ENCODE measurements at regions of chr4 and their contacts with region 1.

Region 1: DNA sequence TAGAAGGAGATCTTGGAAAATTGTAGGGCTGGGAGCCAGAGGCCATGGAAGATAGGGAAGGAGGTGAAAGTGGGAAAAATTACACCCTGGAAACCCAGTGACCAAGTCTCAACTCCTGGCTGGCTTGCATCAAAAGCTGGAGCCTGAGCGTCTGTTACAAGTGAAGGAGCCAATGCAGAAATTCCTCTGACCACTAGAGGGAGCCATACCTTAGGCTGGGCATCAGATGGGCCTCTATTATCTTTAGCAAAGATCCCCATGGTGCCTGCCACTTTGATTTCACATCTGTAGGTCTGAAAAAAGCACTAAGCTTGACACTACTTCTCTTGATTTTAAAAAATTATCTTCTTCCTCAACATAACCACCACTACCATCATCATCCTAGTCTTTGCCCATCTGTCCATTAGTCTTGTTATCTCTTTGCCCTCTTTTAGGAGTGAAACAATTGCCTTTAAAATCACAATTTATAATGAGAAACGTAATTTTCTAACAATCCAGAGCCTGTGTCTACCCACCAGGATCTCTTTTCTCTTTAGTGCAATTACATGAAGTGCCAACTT is 62.9 kb downstream of the ANAPC4 start:
- DNase-seq: peak; percentile 36 to 58
- ATAC-seq: peak; percentile 78 to 90; a peak in 5 of 6 replicates
- H3K4me3 ChIP-seq: no peak overlapping the region
- H3K27ac ChIP-seq: no peak overlapping the region
- H3K4me1 ChIP-seq: no peaks in the 10 kb centered on the region
- CTCF ChIP-seq: peak; percentile 79
- EP300 ChIP-seq: no peak
- POLR2A ChIP-seq: no peak
- RAD21 ChIP-seq: peak; percentile 57 to 68

Region 2: DNA sequence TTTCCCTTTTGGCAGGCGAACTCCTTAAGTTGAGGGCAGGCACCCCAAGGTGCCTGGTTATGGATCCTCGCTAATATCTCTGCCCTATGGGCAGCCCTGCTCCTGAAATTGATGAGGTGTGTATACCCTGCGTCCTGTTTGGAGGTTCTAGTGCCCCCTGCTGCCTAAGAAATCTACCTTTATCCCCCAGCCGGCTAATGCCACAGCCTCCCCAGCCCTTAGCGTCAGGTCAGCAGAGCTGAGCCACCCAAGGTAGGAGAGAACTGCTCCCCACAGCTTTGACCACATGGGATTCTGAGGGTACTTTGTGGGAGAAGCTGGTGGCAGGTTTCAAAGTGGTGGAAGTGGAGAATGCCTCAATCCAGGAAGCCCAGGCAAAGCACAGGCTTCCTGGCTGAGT is 12.1 kb before region 1 on chr4:
- CTCF ChIA-PET with region 1: interaction called, 47 read pairs
- POLR2A ChIA-PET with region 1: no interaction called
- DNase-seq: no peak
- ATAC-seq: no peak
- H3K4me3 ChIP-seq: no peak overlapping the region
- H3K27ac ChIP-seq: no peak overlapping the region
- H3K4me1 ChIP-seq: no peaks in the 10 kb centered on the region
- CTCF ChIP-seq: no peak
- EP300 ChIP-seq: no peak
- POLR2A ChIP-seq: no peak
- RAD21 ChIP-seq: no peak

Region 3: DNA sequence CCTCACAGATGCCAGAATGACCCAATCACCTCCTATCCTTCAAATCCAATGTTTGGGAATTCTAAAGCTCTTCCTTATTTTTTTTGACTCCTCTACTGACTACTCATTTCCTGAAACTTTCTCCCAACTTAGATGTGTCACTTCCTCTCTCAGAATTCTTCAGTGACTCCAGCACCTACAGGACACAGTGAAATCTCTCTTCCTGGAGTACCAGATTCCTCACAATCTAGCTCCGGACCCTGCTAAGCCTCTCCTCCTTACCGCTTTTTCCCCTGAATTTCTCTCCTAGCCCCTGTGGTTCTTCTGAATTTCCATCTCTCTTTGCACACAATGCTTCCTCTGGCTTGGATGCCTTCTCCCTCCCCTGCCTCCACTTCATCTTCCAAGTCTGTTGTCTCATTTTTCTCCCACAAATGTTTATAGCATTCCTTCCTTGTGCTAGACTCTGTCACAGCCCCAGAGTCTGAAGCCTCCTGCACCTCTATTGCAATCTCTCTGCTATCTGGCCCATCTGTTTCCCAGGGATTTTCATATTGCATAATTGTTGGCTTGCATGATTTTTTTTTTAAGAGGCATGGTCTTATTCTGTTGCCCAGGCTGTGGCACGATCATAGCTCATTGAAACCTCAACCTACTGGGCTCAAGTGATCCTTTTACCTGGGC is 17.2 kb after region 1 on chr4:
- CTCF ChIA-PET with region 1: interaction called, 29 read pairs
- POLR2A ChIA-PET with region 1: no interaction called
- DNase-seq: no peak
- ATAC-seq: no peak
- H3K4me3 ChIP-seq: no peak overlapping the region
- H3K27ac ChIP-seq: no peak overlapping the region
- H3K4me1 ChIP-seq: peaks cover 5% of the 10 kb centered on the region; the same call in 2 of the 3 replicates
- CTCF ChIP-seq: no peak
- EP300 ChIP-seq: no peak
- POLR2A ChIP-seq: no peak
- RAD21 ChIP-seq: no peak

Region 4: GRCh38 chr4:25750874-25751273 is 310.9 kb after region 1 on chr4:
- CTCF ChIA-PET with region 1: interaction called, 19 read pairs
- POLR2A ChIA-PET with region 1: no interaction called
- DNase-seq: no peak
- ATAC-seq: no peak
- H3K4me3 ChIP-seq: no peak overlapping the region
- H3K27ac ChIP-seq: no peak overlapping the region
- H3K4me1 ChIP-seq: no peaks in the 10 kb centered on the region
- CTCF ChIP-seq: no peak
- EP300 ChIP-seq: no peak
- POLR2A ChIP-seq: no peak
- RAD21 ChIP-seq: no peak

Region 5: GRCh38 chr4:25756503-25756902 is 316.5 kb after region 1 on chr4:
- CTCF ChIA-PET with region 1: interaction called, 207 read pairs
- POLR2A ChIA-PET with region 1: no interaction called
- DNase-seq: no peak
- ATAC-seq: no peak
- H3K4me3 ChIP-seq: no peak overlapping the region
- H3K27ac ChIP-seq: no peak overlapping the region
- H3K4me1 ChIP-seq: no peaks in the 10 kb centered on the region
- CTCF ChIP-seq: no peak
- EP300 ChIP-seq: no peak
- POLR2A ChIP-seq: no peak
- RAD21 ChIP-seq: no peak

Region 6: DNA sequence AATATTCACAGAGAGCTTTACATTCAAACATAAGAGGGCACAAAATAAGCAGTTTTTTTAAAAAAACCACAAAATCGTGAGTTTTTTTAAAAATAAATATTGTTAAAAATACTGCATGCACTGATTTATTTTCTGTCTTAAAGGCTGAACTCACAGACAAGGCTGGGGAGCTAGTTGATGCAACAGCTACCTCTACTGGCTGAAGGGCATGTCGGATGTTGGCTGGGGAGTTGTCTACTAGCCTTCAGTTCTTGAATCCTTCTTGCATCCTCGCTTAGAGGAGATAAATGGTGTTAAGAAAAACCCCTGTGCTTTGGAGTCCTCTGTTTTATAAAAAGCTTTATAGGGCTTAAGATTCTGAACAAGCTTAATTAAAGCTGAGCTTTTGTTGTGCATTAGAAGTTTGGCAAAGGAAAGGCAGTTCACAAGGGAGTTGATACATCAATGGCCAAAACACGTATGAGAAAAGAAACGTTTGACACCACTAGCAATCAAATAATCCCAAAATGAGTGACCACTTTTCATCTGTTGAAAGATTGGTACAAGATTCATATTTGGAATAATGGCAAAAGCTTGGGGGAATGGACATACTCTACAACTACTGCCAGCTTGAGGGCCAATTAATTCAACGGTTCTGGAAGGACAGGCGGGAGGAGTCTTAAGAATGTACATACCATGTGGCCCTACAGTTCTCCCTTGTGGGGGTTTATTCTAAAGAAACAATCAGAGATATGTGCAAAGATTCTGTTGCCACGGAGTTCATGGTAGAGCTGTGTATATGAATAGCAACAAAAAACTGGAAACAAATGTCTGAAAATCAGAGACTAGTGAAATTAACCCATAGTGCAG is 328.1 kb after region 1 on chr4:
- CTCF ChIA-PET with region 1: interaction called, 207 read pairs
- POLR2A ChIA-PET with region 1: no interaction called
- DNase-seq: peak; percentile 26 to 66
- ATAC-seq: peak; percentile 80 to 89; a peak in 4 of 6 replicates
- H3K4me3 ChIP-seq: no peak overlapping the region
- H3K27ac ChIP-seq: no peak overlapping the region
- H3K4me1 ChIP-seq: no peaks in the 10 kb centered on the region
- CTCF ChIP-seq: peak; percentile 74
- EP300 ChIP-seq: no peak
- POLR2A ChIP-seq: no peak
- RAD21 ChIP-seq: peak; percentile 84 to 89

Region 7: GRCh38 chr4:25792200-25792791 is 352.3 kb after region 1 on chr4:
- CTCF ChIA-PET with region 1: interaction called, 23 read pairs
- POLR2A ChIA-PET with region 1: no interaction called
- DNase-seq: peak; percentile 38 to 53
- ATAC-seq: peak; percentile 74 to 89
- H3K4me3 ChIP-seq: no peak overlapping the region
- H3K27ac ChIP-seq: no peak overlapping the region
- H3K4me1 ChIP-seq: peaks cover 14% of the 10 kb centered on the region
- CTCF ChIP-seq: peak; percentile 54
- EP300 ChIP-seq: no peak
- POLR2A ChIP-seq: no peak
- RAD21 ChIP-seq: peak; percentile 39 to 53; a peak in 3 of 5 replicates